PC-9 (cell line): ENCODE measurements at regions of chr12 and their contacts with region 1.

Region 1: GRCh38 chr12:10052193-10052913 is 21.9 kb downstream of the CLEC9A start:
- DNase-seq: no peak
- H3K4me3 ChIP-seq: no peak overlapping the region
- H3K27ac ChIP-seq: no peak overlapping the region
- H3K4me1 ChIP-seq: no peaks in the 10 kb centered on the region
- H3K27me3 ChIP-seq: no peaks in the 10 kb centered on the region
- CTCF ChIP-seq: no peak

Region 2: DNA sequence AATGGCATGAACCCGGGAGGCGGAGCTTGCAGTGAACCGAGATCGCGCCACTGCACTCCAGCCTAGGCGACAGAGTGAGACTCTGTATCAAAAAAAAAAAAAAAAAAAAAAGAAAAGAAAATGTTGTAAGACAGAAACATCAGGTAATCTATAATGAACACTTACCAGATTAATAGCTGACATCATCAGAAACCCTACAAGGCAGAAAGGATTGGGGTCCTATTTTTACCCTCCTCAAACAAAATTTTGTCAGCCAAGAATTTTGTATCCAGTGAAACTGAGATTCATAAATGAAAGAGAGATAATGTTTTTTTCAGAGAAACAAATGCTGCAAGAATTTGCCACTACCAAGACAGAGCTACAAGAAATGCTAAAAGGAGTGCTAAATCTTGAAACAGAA is 32.4 kb after region 1 on chr12:
- CTCF ChIA-PET with region 1: interaction called, 3 read pairs
- POLR2A ChIA-PET with region 1: interaction called, 21 read pairs
- intact Hi-C with region 1: no loop called
- DNase-seq: no peak
- H3K4me3 ChIP-seq: no peak overlapping the region
- H3K27ac ChIP-seq: no peak overlapping the region
- H3K4me1 ChIP-seq: no peaks in the 10 kb centered on the region
- H3K27me3 ChIP-seq: no peaks in the 10 kb centered on the region
- CTCF ChIP-seq: no peak

Region 3: DNA sequence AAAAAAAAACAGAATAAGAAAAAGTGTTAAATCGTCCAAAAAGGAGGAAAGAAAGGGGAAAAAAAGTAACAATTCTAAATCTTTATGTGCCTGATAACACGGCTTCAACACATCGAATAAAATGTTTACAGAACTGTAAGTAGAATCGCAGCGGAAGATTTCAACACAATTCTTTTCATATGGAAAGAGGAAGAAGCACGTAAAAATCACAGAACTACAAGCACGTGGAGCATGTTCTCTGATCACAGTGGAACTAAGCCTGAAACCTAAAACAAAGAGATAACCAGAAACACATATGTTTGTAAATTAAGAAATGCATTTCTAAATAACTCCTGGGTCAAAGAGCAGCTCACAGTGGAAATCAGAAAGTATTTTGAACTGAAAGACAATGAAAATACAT is 68.9 kb after region 1 on chr12:
- CTCF ChIA-PET with region 1: no interaction called
- POLR2A ChIA-PET with region 1: no interaction called
- intact Hi-C with region 1: no loop called
- DNase-seq: no peak
- H3K4me3 ChIP-seq: no peak overlapping the region
- H3K27ac ChIP-seq: no peak overlapping the region
- H3K4me1 ChIP-seq: no peaks in the 10 kb centered on the region
- H3K27me3 ChIP-seq: no peaks in the 10 kb centered on the region
- CTCF ChIP-seq: no peak

Region 4: DNA sequence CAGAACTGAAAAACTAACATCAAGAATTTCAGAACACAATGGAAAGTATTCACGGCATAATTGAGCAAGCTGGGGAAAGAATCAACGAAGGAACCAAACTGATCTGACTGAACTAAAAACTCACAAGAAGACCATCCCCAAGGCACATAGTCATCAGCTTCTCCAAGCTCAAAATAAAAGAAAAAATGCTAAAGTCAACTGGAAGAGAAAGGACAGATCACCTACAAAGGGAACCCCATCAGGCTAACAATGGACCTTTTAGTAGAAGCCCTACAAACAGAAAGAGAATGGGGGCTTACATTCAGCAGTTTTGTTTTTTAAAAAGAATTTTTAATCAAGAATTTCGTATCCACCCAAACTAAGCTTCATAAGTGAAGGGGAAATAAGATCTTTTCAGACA is 922.6 kb after region 1 on chr12:
- CTCF ChIA-PET with region 1: no interaction called
- POLR2A ChIA-PET with region 1: no interaction called
- intact Hi-C with region 1: no loop called
- DNase-seq: no peak
- H3K4me3 ChIP-seq: no peak overlapping the region
- H3K27ac ChIP-seq: no peak overlapping the region
- H3K4me1 ChIP-seq: no peaks in the 10 kb centered on the region
- H3K27me3 ChIP-seq: no peaks in the 10 kb centered on the region
- CTCF ChIP-seq: no peak